GM10248 (cell line): ENCODE measurements at regions of chr1 and their contacts with region 1.

Region 1: DNA sequence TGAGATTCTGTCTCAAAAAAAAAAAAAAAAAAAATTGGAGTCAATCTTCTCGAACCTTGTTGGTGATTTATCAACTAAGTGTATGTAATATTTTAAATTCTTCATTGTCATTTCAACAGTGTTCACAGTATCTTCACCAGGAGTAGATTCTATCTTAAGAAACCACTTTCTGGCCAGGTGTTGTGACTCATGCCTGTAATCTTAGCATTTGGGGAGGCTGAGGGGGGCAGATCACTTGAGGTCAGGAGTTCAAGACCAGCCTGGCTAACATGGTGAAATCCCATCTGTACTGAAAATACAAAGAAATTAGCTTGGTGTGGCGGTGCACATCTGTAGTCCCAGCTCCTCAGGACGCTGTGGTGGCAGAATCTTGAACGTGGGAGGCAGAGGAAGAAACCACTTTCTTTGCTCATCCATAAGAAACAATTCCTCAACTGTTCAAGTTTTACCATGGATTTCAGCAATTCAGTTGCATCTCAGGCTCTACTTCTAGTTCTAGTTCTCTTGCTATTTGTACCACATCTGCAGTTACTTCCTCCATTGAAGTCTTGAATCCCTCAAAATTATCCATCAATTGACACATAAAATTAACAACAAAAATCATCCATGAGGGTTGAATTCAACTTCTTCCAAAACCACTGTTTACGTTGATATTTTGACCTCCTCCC is 30.4 kb upstream of the EYA3 start:
- DNase-seq: no peak
- CTCF ChIP-seq: no peak

Region 2: DNA sequence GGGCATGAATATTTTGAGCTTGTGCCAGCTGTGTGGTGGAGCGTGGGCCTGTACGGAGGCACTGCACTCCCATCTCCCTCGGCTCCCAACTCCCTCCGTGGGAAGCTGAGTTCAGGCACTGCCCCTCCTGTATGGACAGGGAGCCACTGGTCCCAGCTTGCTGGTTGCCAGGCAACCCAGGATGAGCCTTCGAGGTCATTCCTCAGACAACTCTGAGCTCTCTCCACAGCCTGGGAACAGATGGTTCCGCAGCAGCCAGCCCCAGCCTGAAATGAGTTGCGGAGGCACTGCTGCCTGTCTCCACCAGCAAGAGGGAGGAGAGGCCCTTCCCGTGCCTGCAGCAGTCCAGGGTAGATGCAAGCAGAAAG is 1047.7 kb before region 1 on chr1:
- CTCF ChIA-PET with region 1: no interaction called
- POLR2A ChIA-PET with region 1: no interaction called
- DNase-seq: no peak
- CTCF ChIP-seq: no peak

Region 3: DNA sequence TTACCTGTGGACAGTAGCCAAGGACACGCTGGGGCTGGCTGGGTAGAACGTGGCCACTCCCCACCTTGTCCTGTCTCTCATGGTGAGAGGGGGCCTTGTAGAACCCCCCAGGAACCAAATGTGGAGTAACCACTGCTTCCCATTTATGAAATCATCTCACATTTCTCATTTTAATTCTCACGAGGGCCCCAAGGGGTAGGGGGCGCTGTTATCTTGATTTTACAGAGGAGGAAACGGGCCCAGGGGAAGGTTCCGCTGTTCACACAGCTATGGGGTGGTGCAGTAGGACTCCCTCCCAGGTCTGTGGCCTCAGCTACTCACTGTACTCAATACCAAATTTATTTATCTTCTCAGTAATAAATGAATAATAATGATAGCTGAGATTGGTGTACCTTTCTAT is 178.5 kb before region 1 on chr1:
- CTCF ChIA-PET with region 1: no interaction called
- POLR2A ChIA-PET with region 1: no interaction called
- DNase-seq: peak; percentile 70
- CTCF ChIP-seq: peak; percentile 43

Region 4: GRCh38 chr1:28172713-28173150 is 54.0 kb after region 1 on chr1:
- CTCF ChIA-PET with region 1: no interaction called
- POLR2A ChIA-PET with region 1: interaction called, 17 read pairs
- DNase-seq: peak; percentile 72
- CTCF ChIP-seq: no peak

Region 5: GRCh38 chr1:28266920-28267322 is 148.1 kb after region 1 on chr1:
- CTCF ChIA-PET with region 1: no interaction called
- POLR2A ChIA-PET with region 1: no interaction called
- DNase-seq: no peak
- CTCF ChIP-seq: no peak